Dendritic cell treated with granulocyte-macrophage colony-stimulating factor and Interleukin-4, amounts not matched to agents 40 ng/mL and 50 ng/mL, for 4 days (primary cell): ENCODE measurements at regions of chr7 and their contacts with region 1.

Region 1: GRCh38 chr7:79149866-79150265 is 303.6 kb downstream of the MAGI2 start:
- H3K4me3 Mint-ChIP-seq: no peak overlapping the region
- H3K27ac Mint-ChIP-seq: no peak overlapping the region
- H3K4me1 Mint-ChIP-seq: no peaks in the 10 kb centered on the region
- H3K27me3 Mint-ChIP-seq: no peaks in the 10 kb centered on the region

Region 2: GRCh38 chr7:79217468-79217867 is 67.6 kb after region 1 on chr7:
- intact Hi-C with region 1: loop called (anchors 10 kb)
- H3K4me3 Mint-ChIP-seq: no peak overlapping the region
- H3K27ac Mint-ChIP-seq: no peak overlapping the region
- H3K4me1 Mint-ChIP-seq: no peaks in the 10 kb centered on the region
- H3K27me3 Mint-ChIP-seq: no peaks in the 10 kb centered on the region

Region 3: GRCh38 chr7:79272066-79272669 is 122.3 kb after region 1 on chr7:
- intact Hi-C with region 1: no loop called
- H3K4me3 Mint-ChIP-seq: no peak overlapping the region
- H3K27ac Mint-ChIP-seq: no peak overlapping the region
- H3K4me1 Mint-ChIP-seq: no peaks in the 10 kb centered on the region
- H3K27me3 Mint-ChIP-seq: no peaks in the 10 kb centered on the region